Mammary epithelial cell (primary cell): ENCODE measurements at regions of chr9 and their contacts with region 1.

Region 1: GRCh38 chr9:19493174-19493811 is 84.5 kb downstream of the ACER2 start:
- DNase-seq: peak; percentile 52
- H3K4me3 ChIP-seq: peak overlapping the region; percentile 4 to 37 (median 32)
- H3K27ac ChIP-seq: no peak overlapping the region
- H3K4me1 ChIP-seq: peaks cover 4% of the 10 kb centered on the region
- H3K27me3 ChIP-seq: no peaks in the 10 kb centered on the region
- CTCF ChIP-seq: peak; percentile 77 to 83

Region 2: DNA sequence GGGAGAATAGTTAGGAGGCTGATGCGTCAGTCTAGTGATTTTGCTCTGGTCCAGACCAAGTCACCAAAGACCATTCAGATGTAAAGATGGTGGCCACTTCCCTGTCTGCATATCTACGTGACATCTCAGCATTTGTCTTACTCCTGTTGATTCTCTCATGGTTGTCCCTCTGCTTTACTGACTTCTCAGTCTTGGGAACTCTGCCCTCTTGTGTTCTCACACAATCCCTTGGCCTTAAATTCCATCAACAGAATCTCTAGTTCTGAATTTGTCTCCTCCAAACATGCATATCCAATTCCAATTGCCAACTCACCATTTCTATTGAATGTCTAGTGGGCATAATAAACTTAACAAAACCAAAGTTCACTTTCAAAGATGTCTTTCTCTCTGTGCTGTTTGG is 147.8 kb after region 1 on chr9:
- CTCF ChIA-PET with region 1: no interaction called
- dilution Hi-C with region 1: no loop called
- in situ Hi-C with region 1: no loop called
- intact Hi-C with region 1: loop called (anchors 2 kb)
- DNase-seq: no peak
- H3K4me3 ChIP-seq: no peak overlapping the region
- H3K27ac ChIP-seq: no peak overlapping the region
- H3K4me1 ChIP-seq: no peaks in the 10 kb centered on the region
- H3K27me3 ChIP-seq: no peaks in the 10 kb centered on the region
- CTCF ChIP-seq: peak in 1 of 2 donors; percentile 24

Region 3: GRCh38 chr9:19769208-19769607 is 275.9 kb after region 1 on chr9:
- CTCF ChIA-PET with region 1: no interaction called
- dilution Hi-C with region 1: no loop called
- in situ Hi-C with region 1: no loop called
- intact Hi-C with region 1: loop called (anchors 2 kb)
- DNase-seq: peak; percentile 82
- H3K4me3 ChIP-seq: no peak overlapping the region
- H3K27ac ChIP-seq: no peak overlapping the region
- H3K4me1 ChIP-seq: peaks cover 17% of the 10 kb centered on the region
- H3K27me3 ChIP-seq: no peaks in the 10 kb centered on the region
- CTCF ChIP-seq: peak; percentile 9 to 27